Panc1 (cell line): ENCODE measurements at regions of chr19 and their contacts with region 1.

Region 1: GRCh38 chr19:47483800-47484690 is at the start of gene KPTN:
- DNase-seq: peak; percentile 46
- ATAC-seq: peak; percentile 96
- H3K4me3 ChIP-seq: peak within 1 kb of the TSS; percentile 63 to 64
- H3K27ac ChIP-seq: peak within 1 kb of the TSS; percentile 97
- H3K4me1 ChIP-seq: peaks cover 5% of the 10 kb centered on the region; the same call in 1 of the 2 replicates
- H3K27me3 ChIP-seq: no peaks in the 10 kb centered on the region
- CTCF ChIP-seq: peak; percentile 94
- total RNA-seq, gene KPTN: 26.5 TPM

Region 2: DNA sequence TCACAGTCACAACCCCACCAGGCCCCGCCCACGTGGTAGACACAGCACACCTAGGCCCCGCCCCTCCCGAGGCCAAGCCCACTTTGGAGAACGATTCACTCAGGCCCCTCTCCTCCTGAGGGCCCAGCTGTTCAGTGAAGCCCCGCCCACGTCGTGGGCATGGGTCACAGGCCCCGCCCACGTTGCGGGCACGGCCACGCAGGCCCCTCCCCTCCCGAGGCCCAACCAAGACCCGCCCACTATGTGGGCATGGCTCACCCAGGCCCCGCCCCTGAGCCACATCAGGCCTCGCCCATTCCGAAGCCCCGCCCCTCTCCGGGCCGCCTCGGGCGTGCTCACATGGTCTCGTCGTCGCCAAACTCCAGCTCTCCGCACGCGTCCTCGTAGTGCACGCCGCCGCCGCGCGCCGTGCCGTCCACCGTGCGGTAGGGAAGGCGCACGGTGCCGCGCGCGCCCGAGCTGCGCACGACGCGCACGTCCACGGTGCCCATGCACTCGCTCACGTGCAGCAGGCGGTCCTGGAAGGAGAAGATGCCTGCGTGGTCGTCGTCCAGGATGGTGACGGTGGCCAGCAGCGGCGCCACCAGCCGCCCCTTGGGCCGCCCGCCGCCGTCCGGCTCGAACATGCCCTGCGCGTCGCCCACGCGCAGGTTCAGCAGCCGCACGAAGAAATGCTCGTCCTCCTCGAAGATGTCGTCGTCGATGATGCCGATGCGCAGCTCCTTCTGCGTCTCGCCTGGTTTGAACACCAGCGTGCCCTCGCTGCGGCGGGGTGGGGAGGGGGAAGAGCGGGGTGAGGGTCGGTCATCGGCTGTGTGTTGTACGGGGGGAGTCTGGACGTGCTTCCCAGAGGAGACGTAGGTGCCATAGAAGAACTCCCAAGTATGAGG is 36.3 kb before region 1 on chr19:
- CTCF ChIA-PET with region 1: interaction called, 10 read pairs
- POLR2A ChIA-PET with region 1: no interaction called
- in situ Hi-C with region 1: no loop called
- intact Hi-C with region 1: no loop called
- DNase-seq: no peak
- ATAC-seq: peak; percentile 39
- H3K4me3 ChIP-seq: no peak overlapping the region
- H3K27ac ChIP-seq: no peak overlapping the region
- H3K4me1 ChIP-seq: no peaks in the 10 kb centered on the region
- H3K27me3 ChIP-seq: peaks cover 5% of the 10 kb centered on the region; the same call in 1 of the 2 replicates
- CTCF ChIP-seq: no peak

Region 3: GRCh38 chr19:47523473-47523872 is 39.4 kb after region 1 on chr19:
- CTCF ChIA-PET with region 1: no interaction called
- POLR2A ChIA-PET with region 1: interaction called, 13 read pairs
- in situ Hi-C with region 1: no loop called
- intact Hi-C with region 1: no loop called
- DNase-seq: no peak
- ATAC-seq: no peak
- H3K4me3 ChIP-seq: no peak overlapping the region
- H3K27ac ChIP-seq: no peak overlapping the region; the same call in 1 of the 2 replicates
- H3K4me1 ChIP-seq: peaks cover 8% of the 10 kb centered on the region
- H3K27me3 ChIP-seq: no peaks in the 10 kb centered on the region
- CTCF ChIP-seq: no peak